SK-N-SH (cell line): ENCODE measurements at regions of chr11 and their contacts with region 1.

Region 1: DNA sequence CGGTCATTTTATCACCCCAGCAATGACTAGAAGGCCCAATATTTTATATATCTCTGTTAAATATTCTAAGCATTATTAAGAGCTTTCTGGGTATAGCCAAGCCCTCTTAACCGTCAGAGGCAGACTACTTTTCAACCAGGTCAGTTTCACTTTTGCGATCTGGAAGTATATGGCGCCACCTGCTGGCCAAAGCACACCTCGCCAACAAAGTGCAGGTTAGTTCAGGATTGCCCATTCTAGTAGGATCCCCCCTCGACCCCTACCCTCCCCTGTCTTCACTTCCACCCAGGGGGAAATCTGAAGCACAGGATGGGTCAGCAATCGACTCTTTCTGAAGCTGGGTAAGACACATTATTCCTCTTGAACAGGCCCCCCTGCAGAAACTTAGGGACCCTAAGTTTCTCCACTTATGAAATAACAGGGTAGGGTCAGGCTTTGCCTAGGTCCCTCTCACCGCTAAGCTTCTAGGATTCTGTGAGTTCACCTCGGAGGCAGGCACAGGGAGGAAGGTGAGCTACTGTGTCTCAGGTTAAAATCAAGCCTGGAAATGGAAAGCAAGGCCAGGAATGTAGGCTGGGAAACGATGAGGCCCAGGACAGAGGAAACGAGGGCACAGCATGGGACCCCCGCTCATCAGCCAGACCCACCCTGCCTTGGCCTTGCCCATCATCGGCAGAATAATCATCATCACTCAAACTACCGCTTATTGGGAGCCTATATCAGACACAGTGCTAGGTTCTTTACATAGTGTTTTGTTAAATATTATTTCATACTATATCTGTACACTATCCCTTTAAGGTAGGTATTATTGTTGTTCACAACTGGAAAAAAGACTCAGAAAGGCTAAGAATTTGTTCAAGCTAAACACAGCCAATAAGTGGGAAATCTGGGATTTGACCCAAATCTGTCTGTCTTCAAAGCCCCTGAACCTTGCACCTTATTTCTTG is 35.6 kb downstream of the KCNJ1 start:
- DNase-seq: peak; percentile 79
- H3K4me3 ChIP-seq: peak overlapping the region in 1 of 2 experiments; percentile 34; a peak in 1 of 4 replicates
- H3K27ac ChIP-seq: peak overlapping the region in 1 of 2 experiments; percentile 27; a peak in 1 of 4 replicates
- H3K4me1 ChIP-seq: peaks cover 0 to 6% of the 10 kb centered on the region in 2 experiments; a peak in 1 of 4 replicates
- H3K27me3 ChIP-seq: no peaks in the 10 kb centered on the region
- CTCF ChIP-seq: peak; percentile 90
- EP300 ChIP-seq: no peak
- RAD21 ChIP-seq: peak; percentile 93

Region 2: DNA sequence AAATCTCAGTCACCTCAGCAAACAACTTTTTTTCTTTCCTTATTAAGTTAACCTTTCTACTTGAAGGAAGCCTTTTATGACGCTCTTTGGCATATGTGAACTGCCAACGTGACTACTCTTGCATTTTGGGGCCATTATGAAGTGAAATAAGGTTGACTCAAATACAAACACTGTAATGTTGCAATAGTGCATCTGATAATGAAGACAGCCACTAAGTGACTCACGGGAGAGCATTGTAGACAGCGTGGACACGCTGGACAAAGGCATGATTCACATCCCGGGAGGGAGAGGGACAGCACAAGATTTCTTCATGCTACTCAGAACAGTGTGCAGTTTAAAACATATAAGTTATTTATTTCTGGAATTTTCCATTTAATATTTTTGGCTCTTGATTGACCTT is 804.9 kb before region 1 on chr11:
- CTCF ChIA-PET with region 1: interaction called, 13 read pairs
- POLR2A ChIA-PET with region 1: no interaction called
- DNase-seq: no peak
- H3K4me3 ChIP-seq: no peak overlapping the region
- H3K27ac ChIP-seq: peak overlapping the region in 1 of 2 experiments; percentile 69; a peak in 2 of 4 replicates
- H3K4me1 ChIP-seq: peaks cover 5 to 14% of the 10 kb centered on the region in 2 experiments; a peak in 2 of 4 replicates
- H3K27me3 ChIP-seq: no peaks in the 10 kb centered on the region
- CTCF ChIP-seq: no peak
- EP300 ChIP-seq: peak in 1 of 2 experiments; percentile 88; a peak in 2 of 4 replicates
- RAD21 ChIP-seq: no peak

Region 3: DNA sequence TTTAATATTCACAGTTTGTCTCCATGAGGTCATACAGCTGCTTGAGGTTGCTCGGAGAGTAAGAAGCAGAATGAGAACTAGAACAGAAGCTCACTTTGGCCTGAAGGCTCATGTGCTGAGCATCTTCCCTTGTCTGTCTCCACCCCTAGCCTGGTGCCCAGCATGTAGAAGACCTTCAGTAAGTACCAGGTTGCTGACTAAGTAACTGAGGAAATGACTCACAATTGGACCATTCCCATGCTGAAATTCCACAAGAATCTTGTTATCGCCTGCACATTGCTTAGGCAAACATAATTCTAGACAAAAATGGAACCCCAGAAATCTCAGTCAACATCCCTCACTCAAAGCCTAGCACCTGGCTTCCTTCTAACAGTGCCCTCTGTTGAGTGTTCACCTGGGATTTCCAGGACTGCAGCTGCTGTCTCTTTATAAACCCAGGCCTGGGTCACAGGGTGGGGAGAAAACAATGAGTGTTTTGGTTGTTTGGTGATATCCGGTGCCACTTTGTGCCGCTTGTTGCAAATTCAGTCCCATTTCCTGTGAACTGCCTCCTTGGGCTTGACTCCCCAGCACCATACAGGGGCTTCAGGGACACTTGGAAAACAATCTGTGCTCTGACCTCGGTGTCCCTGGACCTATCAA is 650.9 kb before region 1 on chr11:
- CTCF ChIA-PET with region 1: interaction called, 14 read pairs
- POLR2A ChIA-PET with region 1: no interaction called
- DNase-seq: no peak
- H3K4me3 ChIP-seq: no peak overlapping the region
- H3K27ac ChIP-seq: peak overlapping the region; percentile 39 to 64
- H3K4me1 ChIP-seq: peaks cover 24 to 29% of the 10 kb centered on the region in 2 experiments
- H3K27me3 ChIP-seq: no peaks in the 10 kb centered on the region
- CTCF ChIP-seq: no peak
- EP300 ChIP-seq: peak in 1 of 2 experiments; percentile 87; a peak in 2 of 4 replicates
- RAD21 ChIP-seq: no peak

Region 4: DNA sequence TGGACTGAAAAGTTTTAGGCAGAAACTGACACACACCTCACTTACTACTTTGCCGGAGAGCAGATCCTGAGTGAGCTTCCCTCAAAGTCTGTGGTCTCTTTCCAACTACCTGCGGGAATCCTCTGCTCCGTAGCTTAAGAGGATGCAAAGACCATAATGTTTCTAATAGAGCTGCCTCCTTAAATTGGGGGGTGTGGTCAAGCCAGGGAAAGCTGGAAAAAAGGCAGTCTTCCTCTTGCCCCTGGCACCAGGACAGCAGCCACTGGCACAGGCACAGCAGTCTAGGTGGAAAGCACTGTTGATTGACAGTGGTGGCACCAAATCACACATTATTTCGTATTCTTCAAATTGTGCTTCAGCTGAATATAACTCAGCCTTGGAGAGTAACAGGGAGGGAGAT is 244.0 kb before region 1 on chr11 and contains the start of gene ETS1:
- CTCF ChIA-PET with region 1: no interaction called
- POLR2A ChIA-PET with region 1: no interaction called
- DNase-seq: no peak
- H3K4me3 ChIP-seq: no peak within 1 kb of the TSS
- H3K27ac ChIP-seq: no peak within 1 kb of the TSS
- H3K4me1 ChIP-seq: no peaks in the 10 kb centered on the region; a peak in 1 of 4 replicates
- H3K27me3 ChIP-seq: no peaks in the 10 kb centered on the region; the same call in 1 of the 2 replicates
- CTCF ChIP-seq: no peak
- EP300 ChIP-seq: no peak
- RAD21 ChIP-seq: no peak
- polyA plus RNA-seq, gene ETS1: 14.5 and 17.4 TPM in 2 replicates

Region 5: GRCh38 chr11:128643661-128644317 is 187.7 kb before region 1 on chr11:
- CTCF ChIA-PET with region 1: interaction called, 13 read pairs
- POLR2A ChIA-PET with region 1: no interaction called
- DNase-seq: no peak
- H3K4me3 ChIP-seq: no peak overlapping the region
- H3K27ac ChIP-seq: no peak overlapping the region
- H3K4me1 ChIP-seq: no peaks in the 10 kb centered on the region
- H3K27me3 ChIP-seq: no peaks in the 10 kb centered on the region
- CTCF ChIP-seq: peak; percentile 13; the same call in 1 of the 2 replicates
- EP300 ChIP-seq: no peak
- RAD21 ChIP-seq: no peak

Region 6: GRCh38 chr11:128802358-128802981 is 29.0 kb before region 1 on chr11:
- CTCF ChIA-PET with region 1: interaction called, 42 read pairs
- POLR2A ChIA-PET with region 1: no interaction called
- DNase-seq: peak; percentile 65
- H3K4me3 ChIP-seq: peak overlapping the region in 1 of 2 experiments; percentile 40; a peak in 1 of 4 replicates
- H3K27ac ChIP-seq: peak overlapping the region in 1 of 2 experiments; percentile 41; a peak in 1 of 4 replicates
- H3K4me1 ChIP-seq: peaks cover 5 to 14% of the 10 kb centered on the region in 2 experiments; a peak in 2 of 4 replicates
- H3K27me3 ChIP-seq: no peaks in the 10 kb centered on the region
- CTCF ChIP-seq: peak; percentile 63
- EP300 ChIP-seq: no peak
- RAD21 ChIP-seq: peak; percentile 60

Region 7: GRCh38 chr11:128956401-128957201 is 125.2 kb after region 1 on chr11:
- CTCF ChIA-PET with region 1: interaction called, 10 read pairs
- POLR2A ChIA-PET with region 1: no interaction called
- DNase-seq: peak; percentile 78
- H3K4me3 ChIP-seq: no peak overlapping the region; a peak in 1 of 4 replicates
- H3K27ac ChIP-seq: no peak overlapping the region
- H3K4me1 ChIP-seq: no peaks in the 10 kb centered on the region; a peak in 1 of 4 replicates
- H3K27me3 ChIP-seq: no peaks in the 10 kb centered on the region
- CTCF ChIP-seq: peak; percentile 81
- EP300 ChIP-seq: no peak
- RAD21 ChIP-seq: peak; percentile 97